Endothelial cell of umbilical vein (primary cell): ENCODE measurements at regions of chr15 and their contacts with region 1.

Region 1: GRCh38 chr15:74382004-74382816 is 14.8 kb upstream of the CYP11A1 start:
- DNase-seq: peak; percentile 69
- H3K4me3 ChIP-seq: no peak overlapping the region
- H3K27ac ChIP-seq: no peak overlapping the region
- H3K4me1 ChIP-seq: peaks cover 28% of the 10 kb centered on the region
- H3K27me3 ChIP-seq: no peaks in the 10 kb centered on the region
- CTCF ChIP-seq: peak; percentile 97 to 99
- POLR2A ChIP-seq: no peak

Region 2: DNA sequence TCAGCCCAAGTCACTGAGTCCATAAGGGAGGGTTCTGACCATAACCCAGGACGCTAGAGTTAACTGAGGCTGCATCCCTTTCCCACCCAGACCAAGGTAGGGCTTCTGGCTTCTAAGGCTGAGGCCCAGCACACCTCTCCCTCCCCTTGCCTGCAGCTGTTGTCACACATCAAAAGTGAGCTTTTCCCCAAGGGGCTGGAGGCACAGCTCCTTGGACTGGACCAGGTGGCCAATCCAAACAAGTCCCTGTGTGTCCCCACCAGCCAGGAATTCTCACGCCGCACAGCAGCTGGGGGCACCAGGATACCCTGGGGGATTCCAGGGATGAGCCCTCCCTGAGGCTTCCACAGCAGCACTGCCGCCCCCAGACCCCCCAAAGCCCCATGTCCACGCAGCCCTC is 274.1 kb before region 1 on chr15:
- CTCF ChIA-PET with region 1: no interaction called
- POLR2A ChIA-PET with region 1: no interaction called
- dilution Hi-C with region 1: no loop called
- intact Hi-C with region 1: no loop called
- DNase-seq: no peak
- H3K4me3 ChIP-seq: no peak overlapping the region
- H3K27ac ChIP-seq: no peak overlapping the region
- H3K4me1 ChIP-seq: no peaks in the 10 kb centered on the region
- H3K27me3 ChIP-seq: no peaks in the 10 kb centered on the region
- CTCF ChIP-seq: no peak
- POLR2A ChIP-seq: no peak

Region 3: GRCh38 chr15:74433592-74434262 is 51.5 kb after region 1 on chr15 and contains the start of gene SEMA7A:
- CTCF ChIA-PET with region 1: interaction called, 313 read pairs
- POLR2A ChIA-PET with region 1: interaction called, 4 read pairs
- dilution Hi-C with region 1: no loop called
- intact Hi-C with region 1: loop called (anchors 1 kb)
- DNase-seq: peak; percentile 70
- H3K4me3 ChIP-seq: peak within 1 kb of the TSS; percentile 32 to 63 (median 47)
- H3K27ac ChIP-seq: no peak within 1 kb of the TSS
- H3K4me1 ChIP-seq: no peaks in the 10 kb centered on the region
- H3K27me3 ChIP-seq: peaks cover 26 to 30% of the 10 kb centered on the region in 2 experiments
- CTCF ChIP-seq: no peak
- POLR2A ChIP-seq: peak; percentile 38
- total RNA-seq, gene SEMA7A: 1.3 and 1.7 TPM in 2 replicates

Region 4: DNA sequence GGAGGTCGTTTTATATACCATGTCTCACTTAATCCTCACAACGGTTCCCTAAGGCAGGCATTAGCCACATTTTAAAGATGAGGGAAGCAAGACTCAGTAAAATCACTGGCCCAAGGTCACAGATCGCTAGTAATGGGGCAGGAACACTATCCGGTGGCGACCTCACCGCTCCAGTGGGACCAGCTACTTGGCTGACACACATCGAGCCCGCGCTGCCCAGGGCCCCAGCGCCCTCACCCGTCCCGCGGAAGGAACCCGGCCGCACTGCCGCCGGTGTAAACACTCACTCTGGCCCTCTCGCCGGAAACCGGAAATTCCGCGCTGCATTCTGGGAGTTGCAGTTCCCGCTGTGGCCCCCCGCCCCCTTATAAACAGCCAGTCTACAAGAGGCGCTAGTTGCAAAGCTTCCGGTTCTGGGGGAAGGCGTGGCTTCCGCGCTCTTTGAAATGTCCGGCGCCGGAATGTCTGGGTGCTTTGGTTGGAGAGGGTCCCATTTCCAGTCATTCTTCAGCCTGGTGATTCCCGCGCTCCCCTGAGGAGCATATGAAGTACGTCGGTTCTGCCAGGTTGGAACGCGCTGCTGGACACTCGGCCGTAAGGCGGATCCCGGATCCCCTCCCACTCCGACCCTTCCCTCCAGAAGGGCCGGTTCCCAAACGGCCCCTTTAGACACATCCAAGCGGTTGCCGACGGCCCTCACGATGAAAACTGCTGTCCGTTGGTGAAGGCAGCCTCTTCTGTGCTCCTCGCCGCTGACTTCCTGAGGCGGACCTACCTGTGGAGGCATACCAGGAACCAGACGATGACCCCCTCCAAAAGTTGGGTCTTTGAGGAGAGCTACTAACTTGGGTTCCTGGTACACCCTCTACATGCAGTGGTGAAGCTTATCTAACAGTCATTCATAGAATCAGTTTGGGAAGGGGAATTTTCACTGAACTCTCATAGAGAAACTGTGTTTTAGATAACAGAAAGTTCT is 78.9 kb after region 1 on chr15 and contains the start of gene UBL7:
- CTCF ChIA-PET with region 1: interaction called, 10 read pairs
- POLR2A ChIA-PET with region 1: no interaction called
- dilution Hi-C with region 1: no loop called
- intact Hi-C with region 1: no loop called
- DNase-seq: peak; percentile 98
- H3K4me3 ChIP-seq: peak within 1 kb of the TSS; percentile 61 to 71 (median 69)
- H3K27ac ChIP-seq: peak within 1 kb of the TSS; percentile 80
- H3K4me1 ChIP-seq: peaks cover 9% of the 10 kb centered on the region
- H3K27me3 ChIP-seq: no peaks in the 10 kb centered on the region
- CTCF ChIP-seq: peak in 1 of 2 donors; percentile 25
- POLR2A ChIP-seq: peak; percentile 97
- total RNA-seq, gene UBL7: 31.9 and 32.8 TPM in 2 replicates

Region 5: DNA sequence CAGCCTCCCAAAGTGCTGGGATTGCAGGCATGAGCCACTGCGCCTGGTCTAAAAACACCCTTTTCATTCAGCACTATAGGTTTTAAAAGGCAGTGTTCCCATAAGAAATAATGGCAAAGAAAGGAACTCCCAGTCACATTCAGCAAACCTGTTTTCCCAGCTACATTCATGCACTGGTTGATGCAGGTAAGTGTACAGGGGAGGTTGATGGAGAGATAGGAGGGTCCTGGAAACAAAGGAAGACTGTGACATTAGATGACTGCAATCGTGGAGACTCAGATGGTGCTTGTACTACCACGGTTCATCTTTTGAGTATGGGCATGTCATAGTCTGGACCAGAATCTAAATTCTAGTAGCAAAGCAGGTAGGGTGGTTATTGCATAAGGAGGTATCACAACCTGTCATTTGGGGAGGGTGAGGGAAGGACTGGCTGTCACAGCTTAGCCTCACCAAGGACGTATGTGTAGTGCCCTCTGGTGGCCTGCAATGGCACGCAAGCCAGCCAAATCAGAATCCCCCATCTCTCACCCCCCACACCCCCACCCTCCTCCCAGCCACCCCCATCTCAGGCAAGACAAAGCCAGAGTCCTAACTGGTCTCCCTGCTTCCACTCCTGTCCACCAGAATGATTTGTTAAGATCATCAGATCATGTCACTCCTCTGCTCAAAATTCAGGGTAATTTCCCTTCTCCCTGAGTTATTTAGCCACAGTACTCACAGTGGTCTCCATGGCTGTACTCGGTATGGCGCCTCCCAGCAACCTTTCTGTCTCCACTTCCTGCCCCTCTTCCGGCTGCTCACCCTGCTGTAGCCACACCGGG is 107.5 kb after region 1 on chr15:
- CTCF ChIA-PET with region 1: interaction called, 27 read pairs
- POLR2A ChIA-PET with region 1: interaction called, 5 read pairs
- dilution Hi-C with region 1: no loop called
- intact Hi-C with region 1: loop called (anchors 1 kb)
- DNase-seq: peak; percentile 44
- H3K4me3 ChIP-seq: no peak overlapping the region
- H3K27ac ChIP-seq: no peak overlapping the region
- H3K4me1 ChIP-seq: peaks cover 4% of the 10 kb centered on the region
- H3K27me3 ChIP-seq: no peaks in the 10 kb centered on the region
- CTCF ChIP-seq: peak; percentile 44 to 77
- POLR2A ChIP-seq: no peak

Region 6: DNA sequence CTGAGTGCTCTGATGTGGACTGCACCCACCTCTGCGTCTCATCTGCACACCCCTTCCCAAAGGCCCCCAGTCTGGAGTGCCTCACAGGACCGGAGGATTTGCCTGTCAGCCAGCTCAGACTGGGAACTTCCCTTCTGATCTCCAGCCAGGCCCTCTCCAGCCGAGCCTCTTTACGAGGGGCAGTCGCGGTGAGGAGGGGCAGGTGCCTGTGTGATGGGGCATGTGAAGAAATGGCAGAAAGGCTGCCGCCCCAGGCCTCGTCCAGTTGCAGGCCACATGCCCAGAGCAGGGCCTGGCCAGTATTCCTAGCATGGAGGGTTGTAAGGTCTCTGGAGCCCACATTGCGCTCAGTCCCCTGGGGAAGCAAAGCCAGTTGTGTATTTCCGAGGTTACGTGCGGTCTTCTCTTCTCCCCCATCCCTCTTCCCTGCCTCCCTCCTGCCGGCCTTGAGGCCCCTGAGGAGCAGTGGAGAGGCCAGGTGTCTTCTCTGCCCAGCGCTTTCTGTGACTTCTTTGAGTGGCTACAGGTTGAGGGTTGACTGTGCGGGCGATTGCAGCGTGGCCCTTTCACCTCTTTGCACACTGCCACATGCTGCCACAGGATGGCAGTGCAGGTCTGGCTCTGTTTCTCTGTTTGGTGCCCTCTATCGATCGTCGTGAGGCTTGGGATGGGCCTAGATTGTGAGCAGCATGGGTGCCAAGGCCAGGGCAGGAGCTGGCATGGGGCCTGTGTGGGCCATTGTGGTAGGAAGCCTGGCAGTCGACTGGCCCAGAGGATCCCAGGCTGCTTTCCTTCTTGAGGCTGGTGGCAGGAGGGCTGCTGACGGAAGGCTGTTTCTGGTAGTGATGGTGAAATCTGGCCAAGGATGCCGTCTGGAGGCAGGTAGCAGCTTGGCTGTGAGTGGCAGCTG is 238.7 kb after region 1 on chr15:
- CTCF ChIA-PET with region 1: interaction called, 11 read pairs
- POLR2A ChIA-PET with region 1: no interaction called
- dilution Hi-C with region 1: no loop called
- intact Hi-C with region 1: no loop called
- DNase-seq: peak; percentile 72
- H3K4me3 ChIP-seq: no peak overlapping the region
- H3K27ac ChIP-seq: no peak overlapping the region
- H3K4me1 ChIP-seq: peaks cover 9% of the 10 kb centered on the region
- H3K27me3 ChIP-seq: no peaks in the 10 kb centered on the region
- CTCF ChIP-seq: peak; percentile 99
- POLR2A ChIP-seq: peak; percentile 21